ENCODE measurements at regions of chr6 and their contacts with region 1.

Region 1: DNA sequence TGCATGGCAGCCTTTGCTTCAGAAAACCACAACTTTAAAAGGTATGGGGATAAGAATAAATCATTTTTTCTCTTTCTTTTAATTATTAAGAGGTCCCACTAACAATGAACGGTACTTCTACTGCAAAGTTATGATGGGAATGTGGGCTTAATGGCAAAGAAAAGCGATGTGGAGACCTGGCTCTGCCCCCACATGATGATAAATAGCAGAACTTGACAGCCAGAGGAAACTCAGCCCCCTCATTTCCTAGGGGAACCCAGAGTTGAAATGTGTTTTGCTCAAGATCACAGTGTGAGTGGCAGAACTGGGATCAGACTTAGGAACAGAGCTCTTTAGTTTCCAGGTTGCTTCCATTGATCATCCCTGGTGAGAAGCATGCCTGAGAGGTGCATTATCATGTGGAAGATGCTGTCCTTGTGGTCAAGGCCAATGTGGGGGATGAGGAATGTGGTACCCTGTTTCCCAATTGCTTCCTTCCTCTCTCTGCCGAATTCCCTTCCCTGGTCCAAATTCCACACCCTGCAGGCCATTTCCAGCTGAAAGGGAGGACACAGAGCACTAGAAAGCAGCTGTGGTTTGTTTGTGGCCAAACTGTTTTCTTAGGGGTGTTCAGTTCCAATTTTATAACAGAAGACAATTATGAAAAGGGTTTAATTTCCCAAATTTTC is 66.0 kb downstream of the BACH2 start:
- DNase-seq: peak; percentile 34
- ATAC-seq: no peak
- H3K4me3 Mint-ChIP-seq: peak overlapping the region; percentile 52
- H3K27ac Mint-ChIP-seq: peak overlapping the region; percentile 96
- H3K4me1 Mint-ChIP-seq: peaks cover 92% of the 10 kb centered on the region
- H3K27me3 Mint-ChIP-seq: no peaks in the 10 kb centered on the region
- CTCF ChIP-seq: no peak

Region 2: GRCh38 chr6:90103056-90103800 is 127.5 kb before region 1 on chr6:
- CTCF ChIA-PET with region 1: no interaction called
- POLR2A ChIA-PET with region 1: no interaction called
- intact Hi-C with region 1: no loop called
- DNase-seq: peak; percentile 51
- ATAC-seq: peak; percentile 62
- H3K4me3 Mint-ChIP-seq: peak overlapping the region; percentile 24
- H3K27ac Mint-ChIP-seq: peak overlapping the region; percentile 80
- H3K4me1 Mint-ChIP-seq: peaks cover 88% of the 10 kb centered on the region
- H3K27me3 Mint-ChIP-seq: no peaks in the 10 kb centered on the region
- CTCF ChIP-seq: no peak

Region 3: DNA sequence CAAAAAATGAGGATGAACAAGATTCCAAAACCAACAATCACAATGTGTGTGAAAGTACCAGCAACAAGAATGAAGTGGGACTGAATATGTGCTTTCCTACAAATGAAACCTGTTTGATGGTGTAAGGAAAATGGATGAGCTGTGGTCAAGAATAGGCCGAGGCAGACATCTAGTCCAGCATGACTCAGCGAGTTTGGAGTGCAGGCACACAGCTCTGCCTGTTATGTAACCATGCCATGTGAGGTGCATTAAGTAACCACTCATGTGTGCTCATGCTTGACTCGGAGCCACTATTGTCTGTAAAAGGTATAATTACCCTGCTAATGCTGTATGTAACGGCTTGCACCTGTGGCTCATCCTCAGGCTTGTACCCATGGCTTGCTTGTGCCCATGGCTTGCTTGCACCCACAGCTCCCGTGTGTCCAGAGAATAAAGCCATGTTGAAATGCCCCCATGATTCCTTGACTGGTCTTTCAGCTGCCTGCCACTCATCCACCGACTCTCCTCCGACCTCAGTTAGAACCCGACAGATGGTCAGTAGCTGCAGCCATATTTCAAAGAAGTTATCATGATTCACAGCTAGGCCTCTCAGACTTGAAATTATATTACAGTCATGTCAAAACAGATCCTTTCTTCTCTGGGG is 32.7 kb before region 1 on chr6:
- CTCF ChIA-PET with region 1: no interaction called
- POLR2A ChIA-PET with region 1: interaction called, 4 read pairs
- intact Hi-C with region 1: loop called (anchors 5 kb)
- DNase-seq: peak; percentile 37
- ATAC-seq: no peak
- H3K4me3 Mint-ChIP-seq: no peak overlapping the region
- H3K27ac Mint-ChIP-seq: peak overlapping the region; percentile 87
- H3K4me1 Mint-ChIP-seq: peaks cover 77% of the 10 kb centered on the region
- H3K27me3 Mint-ChIP-seq: no peaks in the 10 kb centered on the region
- CTCF ChIP-seq: no peak

Region 4: GRCh38 chr6:90256698-90257485 is 26.2 kb after region 1 on chr6:
- CTCF ChIA-PET with region 1: interaction called, 3 read pairs
- POLR2A ChIA-PET with region 1: interaction called, 5 read pairs
- intact Hi-C with region 1: loop called (anchors 2 kb)
- DNase-seq: peak; percentile 65
- ATAC-seq: peak; percentile 87
- H3K4me3 Mint-ChIP-seq: peak overlapping the region; percentile 5
- H3K27ac Mint-ChIP-seq: peak overlapping the region; percentile 94
- H3K4me1 Mint-ChIP-seq: peaks cover 92% of the 10 kb centered on the region
- H3K27me3 Mint-ChIP-seq: no peaks in the 10 kb centered on the region
- CTCF ChIP-seq: no peak

Region 5: GRCh38 chr6:90425161-90425641 is 194.5 kb after region 1 on chr6:
- CTCF ChIA-PET with region 1: no interaction called
- POLR2A ChIA-PET with region 1: no interaction called
- intact Hi-C with region 1: no loop called
- DNase-seq: peak; percentile 64
- ATAC-seq: peak; percentile 96
- H3K4me3 Mint-ChIP-seq: peak overlapping the region; percentile 52
- H3K27ac Mint-ChIP-seq: peak overlapping the region; percentile 91
- H3K4me1 Mint-ChIP-seq: peaks cover 25% of the 10 kb centered on the region
- H3K27me3 Mint-ChIP-seq: no peaks in the 10 kb centered on the region
- CTCF ChIP-seq: no peak

Measured in activated CD8-positive, alpha-beta T cell treated with anti-CD3 and anti-CD28 coated beads for 36 hours (primary cell).